RWPE1 (cell line): ENCODE measurements at regions of chr2 and their contacts with region 1.

Region 1: GRCh38 chr2:60581433-60582282 is 28.2 kb upstream of the BCL11A start:
- DNase-seq: peak; percentile 73
- H3K27ac ChIP-seq: no peak overlapping the region
- CTCF ChIP-seq: peak; percentile 97

Region 2: GRCh38 chr2:60560734-60561644 is 20.7 kb before region 1 on chr2:
- CTCF ChIA-PET with region 1: interaction called, 24 read pairs
- POLR2A ChIA-PET with region 1: no interaction called
- DNase-seq: peak; percentile 20
- H3K27ac ChIP-seq: no peak overlapping the region
- CTCF ChIP-seq: peak; percentile 34

Region 3: DNA sequence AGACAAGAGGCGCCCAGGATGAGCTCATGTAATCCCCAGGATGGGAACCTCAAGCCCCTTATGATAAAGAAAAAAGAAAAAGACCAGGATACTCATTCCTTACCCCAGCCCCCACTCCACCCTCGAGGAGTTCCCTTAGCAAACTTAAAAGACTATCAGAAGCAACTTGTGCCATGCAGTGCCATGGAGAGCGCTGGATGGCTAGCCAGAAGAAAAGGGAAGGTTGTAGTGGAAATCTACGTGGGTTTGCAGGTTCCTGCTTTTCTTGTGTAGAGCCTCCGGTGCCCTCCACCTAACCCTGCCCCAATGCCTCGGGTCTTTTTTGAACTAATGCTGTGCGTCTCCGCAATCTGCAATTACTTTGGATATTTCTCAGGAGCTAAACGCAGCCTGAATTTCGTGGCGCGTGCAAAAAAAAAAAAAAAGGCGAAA is 12.0 kb before region 1 on chr2:
- CTCF ChIA-PET with region 1: interaction called, 13 read pairs
- POLR2A ChIA-PET with region 1: no interaction called
- DNase-seq: no peak
- H3K27ac ChIP-seq: no peak overlapping the region
- CTCF ChIP-seq: no peak

Region 4: DNA sequence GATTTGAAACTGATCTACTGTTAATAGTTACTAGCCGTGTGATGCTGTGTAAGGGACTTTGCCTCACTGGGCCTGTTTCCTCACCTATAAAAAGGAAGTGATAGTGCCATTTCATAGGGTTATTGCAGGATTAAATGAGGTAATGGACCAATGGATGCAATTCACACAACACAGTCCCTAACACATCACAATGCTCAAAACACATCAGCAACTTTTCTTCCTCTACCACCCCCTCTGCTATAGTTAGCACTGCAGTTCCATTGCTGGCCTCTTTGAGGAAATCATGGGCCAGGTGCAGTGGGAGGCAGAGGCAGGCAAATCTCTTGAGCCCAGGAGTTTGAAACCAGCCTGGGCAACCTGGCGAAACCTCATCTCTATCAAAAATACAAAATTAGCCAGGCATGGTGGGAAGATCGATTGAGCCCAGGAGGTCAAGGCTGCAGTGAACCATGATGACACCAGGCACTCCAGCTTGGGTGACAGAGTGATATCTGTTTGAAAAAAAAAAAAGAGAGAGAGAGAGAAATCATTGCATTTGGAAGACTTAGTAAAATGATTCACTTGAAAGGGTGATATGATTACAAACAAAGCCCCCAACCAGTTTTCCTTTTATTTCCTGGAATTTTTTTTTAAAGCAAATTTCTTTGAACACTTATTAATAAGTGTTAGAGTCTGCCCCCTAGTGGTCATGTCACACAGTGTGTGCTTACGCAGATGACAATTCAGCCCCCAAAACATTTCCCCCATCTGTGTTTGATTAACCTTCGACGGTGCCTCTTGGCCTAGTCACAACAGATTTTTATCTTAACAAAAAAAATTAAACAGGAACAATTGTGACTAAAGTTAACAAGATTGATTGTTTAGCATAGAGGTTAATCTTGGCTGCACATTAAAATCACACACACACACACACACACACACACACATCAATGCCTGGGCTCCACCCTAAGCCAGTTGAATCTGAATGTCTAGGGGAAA is 60.4 kb after region 1 on chr2:
- CTCF ChIA-PET with region 1: interaction called, 16 read pairs
- POLR2A ChIA-PET with region 1: no interaction called
- DNase-seq: peak; percentile 38
- H3K27ac ChIP-seq: no peak overlapping the region
- CTCF ChIP-seq: peak; percentile 77